H1 (cell line): ENCODE measurements at regions of chr1 and their contacts with region 1.

Region 1: GRCh38 chr1:31891280-31891679 is 46.9 kb downstream of the PTP4A2 start:
- DNase-seq: no peak
- H3K4me3 ChIP-seq: no peak overlapping the region
- H3K27ac ChIP-seq: no peak overlapping the region
- H3K4me1 ChIP-seq: peaks cover 0 to 3% (median 0%) of the 10 kb centered on the region in 4 experiments; a peak in 1 of 7 replicates
- H3K27me3 ChIP-seq: no peaks in the 10 kb centered on the region
- CTCF ChIP-seq: no peak
- EP300 ChIP-seq: no peak
- POLR2A ChIP-seq: no peak
- RAD21 ChIP-seq: no peak

Region 2: GRCh38 chr1:31617917-31618660 is 273.2 kb before region 1 on chr1:
- CTCF ChIA-PET with region 1: no interaction called
- POLR2A ChIA-PET with region 1: no interaction called
- DNase-seq: peak in 1 of 2 experiments; percentile 88
- H3K4me3 ChIP-seq: peak overlapping the region; percentile 57 to 88 (median 64)
- H3K27ac ChIP-seq: no peak overlapping the region
- H3K4me1 ChIP-seq: peaks cover 2 to 11% (median 7%) of the 10 kb centered on the region in 4 experiments; a peak in 5 of 7 replicates
- H3K27me3 ChIP-seq: peaks cover 6 to 22% (median 16%) of the 10 kb centered on the region in 4 experiments
- CTCF ChIP-seq: peak; percentile 70 to 83 (median 74)
- EP300 ChIP-seq: no peak
- POLR2A ChIP-seq: no peak
- RAD21 ChIP-seq: peak; percentile 46 to 59; a peak in 3 of 4 replicates

Region 3: DNA sequence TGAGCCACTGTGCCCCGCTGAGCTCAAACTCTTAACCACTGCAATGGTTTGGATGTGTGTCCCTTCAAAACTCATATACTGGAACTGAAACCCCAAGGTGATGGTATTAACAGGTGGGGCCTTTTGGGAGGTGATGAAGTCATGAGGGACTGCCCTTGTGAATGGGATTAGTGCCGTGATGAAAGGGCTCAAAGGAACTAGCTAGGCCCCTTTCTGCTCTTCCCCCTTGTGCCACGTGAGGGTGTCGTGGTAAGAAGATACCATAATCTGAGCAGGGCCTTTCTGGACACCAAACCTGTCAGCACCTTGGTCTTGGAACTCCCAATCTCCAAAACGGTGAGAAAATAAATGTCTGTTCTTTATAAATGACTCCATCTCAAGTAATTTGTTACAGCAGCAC is 29.9 kb before region 1 on chr1:
- CTCF ChIA-PET with region 1: no interaction called
- POLR2A ChIA-PET with region 1: no interaction called
- DNase-seq: no peak
- H3K4me3 ChIP-seq: no peak overlapping the region
- H3K27ac ChIP-seq: no peak overlapping the region
- H3K4me1 ChIP-seq: no peaks in the 10 kb centered on the region
- H3K27me3 ChIP-seq: no peaks in the 10 kb centered on the region; a peak in 1 of 7 replicates
- CTCF ChIP-seq: no peak
- EP300 ChIP-seq: no peak
- POLR2A ChIP-seq: no peak
- RAD21 ChIP-seq: peak in 1 of 2 experiments; percentile 29; a peak in 1 of 4 replicates

Region 4: DNA sequence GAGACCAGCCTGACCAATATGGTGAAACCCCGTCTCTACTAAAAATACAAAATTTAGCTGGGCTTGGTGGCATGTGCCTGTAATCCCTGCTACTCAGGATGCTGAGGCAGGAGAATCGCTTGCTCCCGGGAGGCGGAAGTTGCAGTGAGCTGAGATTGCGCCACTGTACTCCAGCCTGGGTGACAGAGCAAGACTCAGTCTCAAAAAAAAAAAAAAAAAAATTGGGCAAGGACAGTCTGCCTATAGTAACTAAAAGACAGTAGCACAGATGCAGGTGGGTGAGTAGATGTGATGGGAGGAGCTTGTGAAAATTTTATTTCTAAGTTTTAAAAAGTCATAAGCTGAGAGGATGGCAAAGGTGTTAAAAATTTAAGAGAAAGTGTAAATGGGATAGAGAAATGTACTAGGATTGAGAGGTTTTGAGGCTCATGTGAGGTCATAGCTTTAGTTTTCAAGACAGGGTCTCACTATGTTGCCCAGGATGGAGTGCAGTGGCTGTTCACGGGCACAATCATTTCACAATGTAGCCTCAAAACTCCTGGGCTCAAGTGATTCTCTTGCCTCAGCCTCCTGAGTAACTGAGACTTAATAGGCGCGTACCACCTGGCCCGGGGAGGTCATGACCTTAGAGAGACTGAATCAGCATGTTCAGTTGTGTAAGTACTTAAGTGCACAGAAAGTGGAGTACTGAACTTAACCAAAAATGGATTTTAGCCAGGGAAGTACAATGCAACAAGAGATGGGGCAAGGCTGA is 13.2 kb after region 1 on chr1:
- CTCF ChIA-PET with region 1: interaction called, 3 read pairs
- POLR2A ChIA-PET with region 1: interaction called, 10 read pairs
- DNase-seq: no peak
- H3K4me3 ChIP-seq: no peak overlapping the region
- H3K27ac ChIP-seq: no peak overlapping the region
- H3K4me1 ChIP-seq: no peaks in the 10 kb centered on the region
- H3K27me3 ChIP-seq: no peaks in the 10 kb centered on the region
- CTCF ChIP-seq: no peak
- EP300 ChIP-seq: no peak
- POLR2A ChIP-seq: no peak
- RAD21 ChIP-seq: no peak

Region 5: GRCh38 chr1:32172621-32173245 is 281.5 kb after region 1 on chr1:
- CTCF ChIA-PET with region 1: no interaction called
- POLR2A ChIA-PET with region 1: no interaction called
- DNase-seq: no peak
- H3K4me3 ChIP-seq: no peak overlapping the region
- H3K27ac ChIP-seq: no peak overlapping the region
- H3K4me1 ChIP-seq: no peaks in the 10 kb centered on the region
- H3K27me3 ChIP-seq: no peaks in the 10 kb centered on the region
- CTCF ChIP-seq: no peak
- EP300 ChIP-seq: no peak
- POLR2A ChIP-seq: no peak
- RAD21 ChIP-seq: no peak

Region 6: DNA sequence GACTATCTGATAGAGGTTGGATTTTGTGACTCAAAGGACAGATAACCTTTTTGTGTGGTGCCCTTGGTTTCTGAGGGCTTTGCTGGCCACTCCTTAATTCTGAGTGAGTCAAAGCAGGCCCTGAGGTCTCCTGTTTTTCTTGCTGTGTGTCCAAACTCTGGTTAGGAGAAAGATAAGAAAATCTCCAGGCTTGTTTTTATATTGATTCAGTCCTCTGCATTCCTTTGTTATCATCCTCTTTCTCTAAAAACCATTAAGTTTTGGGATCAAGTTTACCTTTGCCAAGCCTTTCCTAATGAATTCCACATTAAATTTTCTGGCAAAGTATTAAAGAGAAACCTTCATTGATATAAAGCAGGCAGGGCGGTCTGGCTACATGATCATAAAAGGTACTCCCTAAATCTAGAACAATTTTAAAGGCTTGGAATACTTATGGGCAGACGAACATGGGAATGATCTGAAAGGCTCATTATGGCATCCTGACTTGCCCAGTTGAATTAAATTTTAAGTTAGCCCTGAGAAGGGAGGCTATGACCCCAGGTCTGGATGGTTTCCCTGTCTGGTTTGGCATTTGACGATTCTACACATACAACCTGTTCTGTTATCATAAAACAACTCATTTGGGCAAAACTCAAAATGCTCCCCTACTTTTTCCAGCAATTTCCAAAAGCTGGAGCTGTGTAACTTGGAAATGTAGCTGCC is 594.4 kb after region 1 on chr1:
- CTCF ChIA-PET with region 1: no interaction called
- POLR2A ChIA-PET with region 1: no interaction called
- DNase-seq: no peak
- H3K4me3 ChIP-seq: no peak overlapping the region
- H3K27ac ChIP-seq: no peak overlapping the region
- H3K4me1 ChIP-seq: peaks cover 0 to 5% (median 0%) of the 10 kb centered on the region in 4 experiments; a peak in 2 of 7 replicates
- H3K27me3 ChIP-seq: no peaks in the 10 kb centered on the region
- CTCF ChIP-seq: no peak
- EP300 ChIP-seq: no peak
- POLR2A ChIP-seq: no peak
- RAD21 ChIP-seq: no peak